ENCODE measurements at regions of chr9 and their contacts with region 1.

Region 1: DNA sequence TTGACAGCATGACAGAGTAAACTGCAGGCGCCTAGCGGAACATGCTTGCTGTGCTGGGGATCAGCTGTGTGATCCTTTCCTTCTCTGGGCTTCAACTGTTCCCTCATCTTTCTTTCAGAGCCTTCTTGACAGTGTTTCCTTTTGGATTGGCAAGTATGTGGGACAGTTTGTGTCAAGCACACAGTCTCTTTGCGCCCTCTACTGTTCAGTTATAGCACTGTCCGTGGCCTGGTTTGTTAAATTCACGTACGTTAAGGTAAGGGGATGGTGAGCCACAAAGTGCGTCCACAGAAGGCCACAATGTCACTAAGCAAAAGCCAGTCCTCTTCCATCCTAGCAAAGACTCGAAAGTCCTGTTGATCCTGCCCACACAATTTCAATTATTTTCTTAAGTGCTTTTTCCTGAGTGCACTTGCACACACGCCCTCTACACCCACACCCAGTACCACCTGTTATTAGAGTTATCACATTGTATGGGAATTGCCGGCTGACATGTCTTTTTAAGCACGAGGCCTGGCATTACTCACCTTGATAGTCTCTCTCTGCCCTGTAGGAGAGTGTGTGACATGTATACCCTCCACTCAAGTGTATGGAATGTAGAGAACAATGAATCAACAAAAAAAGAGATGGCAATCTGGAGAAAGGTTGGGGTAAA is 22.5 kb upstream of the PTPN3 start:
- DNase-seq: peak; percentile 76
- H3K4me3 ChIP-seq: no peak overlapping the region
- H3K27ac ChIP-seq: no peak overlapping the region
- H3K4me1 ChIP-seq: no peaks in the 10 kb centered on the region
- H3K27me3 ChIP-seq: peaks cover 13% of the 10 kb centered on the region
- CTCF ChIP-seq: peak; percentile 91

Region 2: DNA sequence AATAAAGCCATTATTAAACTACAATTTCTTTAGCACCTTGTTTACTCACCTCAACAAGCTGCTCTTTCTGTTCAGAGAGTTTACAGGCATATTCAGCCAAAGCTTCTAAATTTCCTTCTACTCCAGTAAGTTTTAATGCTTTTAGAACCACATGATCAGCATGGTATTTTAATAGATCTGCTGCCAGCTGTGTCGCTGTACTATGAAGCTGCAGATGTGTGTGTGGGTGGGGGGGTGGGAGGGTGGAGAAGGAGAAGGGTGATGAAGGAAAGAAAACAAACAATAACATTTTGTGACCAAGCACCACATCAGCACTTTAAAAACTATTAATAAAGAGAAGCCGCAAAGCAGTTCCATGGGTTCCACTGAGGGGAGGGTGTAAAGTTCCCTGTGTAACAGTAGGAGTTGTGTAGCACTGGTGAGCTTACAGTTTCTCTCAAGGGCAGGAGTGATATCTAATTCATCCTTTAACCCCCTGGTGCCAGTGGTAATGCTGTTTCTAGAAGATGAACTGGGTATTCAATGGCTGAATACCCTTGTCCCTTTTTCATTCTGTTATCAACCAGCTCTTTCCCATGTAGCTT is 547.9 kb before region 1 on chr9:
- CTCF ChIA-PET with region 1: no interaction called
- POLR2A ChIA-PET with region 1: no interaction called
- intact Hi-C with region 1: no loop called
- DNase-seq: peak; percentile 27
- H3K4me3 ChIP-seq: no peak overlapping the region
- H3K27ac ChIP-seq: peak overlapping the region; percentile 22
- H3K4me1 ChIP-seq: peaks cover 14% of the 10 kb centered on the region
- H3K27me3 ChIP-seq: no peaks in the 10 kb centered on the region
- CTCF ChIP-seq: no peak

Region 3: DNA sequence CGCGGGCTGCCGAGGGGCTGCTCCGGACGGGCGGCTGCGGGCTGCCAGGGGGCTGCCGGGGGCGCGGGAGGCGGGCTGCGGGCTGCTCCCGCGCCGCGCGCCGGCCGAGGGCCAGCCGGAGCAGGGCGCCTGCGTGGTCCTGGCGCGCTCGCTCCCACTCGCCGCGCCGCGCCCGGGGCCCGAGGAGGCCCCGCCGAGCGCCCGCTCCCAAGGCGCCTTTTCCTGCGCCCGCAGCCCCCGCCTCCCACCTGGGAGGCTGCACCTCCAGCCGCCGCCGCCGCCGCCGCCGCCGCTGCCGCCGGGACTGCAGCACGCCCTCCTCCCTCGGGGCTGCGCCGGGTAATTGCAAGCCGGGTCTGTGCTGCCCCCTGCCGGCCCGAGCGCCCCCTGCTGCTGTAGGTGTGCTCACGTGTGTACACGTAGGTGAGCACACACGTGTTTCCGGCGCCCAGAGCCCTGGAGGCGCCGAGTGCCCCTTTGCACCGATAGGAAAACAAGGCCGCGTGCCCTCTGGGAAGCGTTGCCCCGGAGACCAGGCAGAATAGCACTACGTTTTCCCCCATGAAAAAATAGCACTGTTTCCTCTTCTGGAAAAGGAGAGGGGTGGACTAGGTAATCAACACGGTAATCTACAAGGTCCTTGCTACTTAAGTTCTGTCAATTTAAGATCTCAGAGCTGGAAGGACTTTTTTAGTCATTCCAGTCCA is 199.7 kb before region 1 on chr9 and contains the start of gene EPB41L4B:
- CTCF ChIA-PET with region 1: no interaction called
- POLR2A ChIA-PET with region 1: no interaction called
- intact Hi-C with region 1: no loop called
- DNase-seq: peak; percentile 73
- H3K4me3 ChIP-seq: peak within 1 kb of the TSS; percentile 33
- H3K27ac ChIP-seq: no peak within 1 kb of the TSS
- H3K4me1 ChIP-seq: no peaks in the 10 kb centered on the region
- H3K27me3 ChIP-seq: peaks cover 69% of the 10 kb centered on the region
- CTCF ChIP-seq: peak; percentile 85
- total RNA-seq, gene EPB41L4B: 0.07 TPM in 1 of 2 replicates, not detected in the other

Region 4: GRCh38 chr9:109440797-109441287 is 79.8 kb before region 1 on chr9:
- CTCF ChIA-PET with region 1: no interaction called
- POLR2A ChIA-PET with region 1: no interaction called
- intact Hi-C with region 1: loop called (anchors 2 kb)
- DNase-seq: peak; percentile 87
- H3K4me3 ChIP-seq: no peak overlapping the region
- H3K27ac ChIP-seq: no peak overlapping the region
- H3K4me1 ChIP-seq: no peaks in the 10 kb centered on the region
- H3K27me3 ChIP-seq: peaks cover 19% of the 10 kb centered on the region
- CTCF ChIP-seq: peak; percentile 86